ENCODE measurements at regions of chr2 and their contacts with region 1.

Region 1: DNA sequence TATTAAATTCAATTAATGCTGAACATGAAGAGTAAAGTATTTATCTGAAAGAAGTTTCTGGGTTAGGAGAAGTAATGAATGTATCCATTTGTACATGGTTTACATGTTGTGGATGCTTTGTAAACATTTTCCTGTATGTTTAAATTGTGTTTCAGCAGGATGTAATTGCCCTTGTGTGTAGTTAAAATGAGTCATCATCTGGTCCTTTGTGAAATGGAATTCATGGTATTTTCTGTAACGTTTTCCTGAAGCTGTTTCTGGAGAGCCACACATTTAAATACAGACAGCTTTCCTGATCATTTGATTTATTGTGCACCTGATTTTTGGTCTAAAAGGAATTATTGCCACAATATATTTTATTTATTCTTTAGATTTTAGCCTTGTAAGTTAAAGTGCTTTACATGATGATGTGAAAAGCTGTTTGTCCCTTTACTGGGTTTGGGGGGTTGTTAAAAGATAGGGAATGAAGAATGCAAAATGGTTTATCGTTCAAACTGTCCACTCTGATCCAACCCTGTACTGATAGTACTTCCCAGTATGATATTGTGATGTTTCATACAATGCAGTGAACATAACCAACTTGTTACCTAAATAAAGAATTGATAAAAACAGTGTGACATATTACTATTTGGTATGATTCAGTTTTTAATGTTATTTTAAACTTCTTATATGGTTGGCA is 41.7 kb upstream of the SLC3A1 start:
- DNase-seq: no peak
- ATAC-seq: no peak
- H3K4me3 ChIP-seq: no peak overlapping the region
- H3K27ac ChIP-seq: no peak overlapping the region
- H3K4me1 ChIP-seq: no peaks in the 10 kb centered on the region
- H3K27me3 ChIP-seq: no peaks in the 10 kb centered on the region

Region 2: GRCh38 chr2:44009135-44009735 is 224.4 kb before region 1 on chr2:
- intact Hi-C with region 1: no loop called
- DNase-seq: no peak
- ATAC-seq: no peak
- H3K4me3 ChIP-seq: no peak overlapping the region
- H3K27ac ChIP-seq: no peak overlapping the region
- H3K4me1 ChIP-seq: no peaks in the 10 kb centered on the region
- H3K27me3 ChIP-seq: peaks cover 0 to 1% of the 10 kb centered on the region in 2 donors

Region 3: GRCh38 chr2:44305882-44306281 is 72.3 kb after region 1 on chr2:
- intact Hi-C with region 1: loop called in 1 of 2 experiments (anchors 5 kb)
- DNase-seq: no peak
- ATAC-seq: no peak
- H3K4me3 ChIP-seq: no peak overlapping the region
- H3K27ac ChIP-seq: no peak overlapping the region
- H3K4me1 ChIP-seq: no peaks in the 10 kb centered on the region
- H3K27me3 ChIP-seq: no peaks in the 10 kb centered on the region

Region 4: GRCh38 chr2:44912660-44913059 is 679.1 kb after region 1 on chr2:
- intact Hi-C with region 1: no loop called
- DNase-seq: no peak
- ATAC-seq: peak; percentile 60
- H3K4me3 ChIP-seq: no peak overlapping the region
- H3K27ac ChIP-seq: no peak overlapping the region
- H3K4me1 ChIP-seq: no peaks in the 10 kb centered on the region
- H3K27me3 ChIP-seq: no peaks in the 10 kb centered on the region

Region 5: DNA sequence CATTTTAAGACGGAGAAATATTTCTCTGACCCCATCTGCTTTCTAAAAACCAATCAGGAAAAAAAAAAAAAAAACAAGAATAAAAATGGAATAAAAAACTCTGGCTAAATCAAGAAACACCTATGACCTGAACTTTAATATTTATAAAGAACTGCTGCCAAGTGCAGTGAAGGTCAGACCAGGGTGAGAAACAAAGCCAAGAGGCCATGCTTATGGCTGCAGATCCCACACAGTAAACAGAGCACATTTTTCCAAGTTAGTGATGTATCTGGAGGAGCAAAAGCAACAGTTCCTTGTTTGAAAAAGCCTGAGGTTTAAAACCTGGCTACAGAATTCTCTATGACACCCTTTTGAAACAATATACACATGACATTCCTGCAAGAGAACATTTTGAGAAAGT is 1135.2 kb after region 1 on chr2:
- intact Hi-C with region 1: no loop called
- DNase-seq: no peak
- ATAC-seq: no peak
- H3K4me3 ChIP-seq: no peak overlapping the region
- H3K27ac ChIP-seq: no peak overlapping the region
- H3K4me1 ChIP-seq: no peaks in the 10 kb centered on the region
- H3K27me3 ChIP-seq: no peaks in the 10 kb centered on the region

Measured in aorta (tissue), 5 donors.